ENCODE measurements at regions of chr7 and their contacts with region 1.

Region 1: DNA sequence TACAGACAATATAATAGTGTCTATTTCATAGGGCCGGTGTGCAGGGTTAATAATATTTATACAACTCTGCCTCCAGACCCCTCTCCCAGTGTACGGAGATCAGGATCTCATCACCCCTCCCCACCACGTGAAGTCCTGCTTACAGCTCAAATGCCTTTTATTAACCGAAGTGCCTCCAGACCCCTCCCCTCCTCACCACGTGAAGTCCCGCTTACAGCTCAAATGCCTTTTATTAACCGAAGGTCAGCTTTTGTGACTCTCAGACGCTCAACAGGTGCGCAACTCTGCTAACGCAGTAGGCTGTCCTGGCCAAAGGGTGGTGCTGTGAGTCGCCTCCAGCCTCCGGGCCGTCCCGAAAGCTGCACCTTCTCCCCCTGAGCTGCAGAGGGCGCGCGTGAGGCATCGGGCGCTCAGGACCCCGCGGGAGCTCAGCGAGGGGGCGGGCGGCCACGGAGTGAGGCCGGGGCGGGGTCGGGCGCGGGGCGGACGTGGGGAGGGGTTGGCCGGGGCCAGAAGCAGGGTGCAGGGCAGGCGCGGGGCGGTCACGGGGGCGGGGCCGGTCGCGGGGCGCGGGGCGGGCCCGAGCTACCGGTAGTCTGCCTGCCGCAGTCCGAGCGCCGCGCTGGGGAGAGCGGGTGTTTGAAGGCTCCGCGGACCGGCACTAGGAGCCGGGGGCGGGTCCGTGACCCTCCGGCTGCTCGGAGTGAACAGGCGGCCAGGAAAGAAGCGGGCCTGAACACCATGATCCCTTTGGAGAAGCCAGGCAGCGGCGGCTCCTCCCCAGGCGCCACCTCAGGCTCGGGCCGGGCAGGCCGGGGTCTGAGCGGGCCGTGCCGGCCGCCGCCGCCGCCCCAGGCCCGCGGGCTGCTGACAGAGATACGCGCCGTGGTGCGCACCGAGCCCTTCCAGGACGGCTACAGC is at the start of gene STK17A:
- DNase-seq: peak; percentile 91 to 100 (median 95)
- ATAC-seq: peak; percentile 93
- H3K4me3 ChIP-seq: peak within 1 kb of the TSS; percentile 79
- H3K4me3 Mint-ChIP-seq: peak within 1 kb of the TSS; percentile 96 to 100 (median 98)
- H3K27ac ChIP-seq: peak within 1 kb of the TSS; percentile 96
- H3K27ac Mint-ChIP-seq: peak within 1 kb of the TSS; percentile 89 to 100 (median 95)
- H3K4me1 ChIP-seq: peaks cover 8 to 10% of the 10 kb centered on the region in 2 donors
- H3K4me1 Mint-ChIP-seq: peaks cover 10 to 33% (median 13%) of the 10 kb centered on the region in 7 donors
- H3K27me3 ChIP-seq: no peaks in the 10 kb centered on the region
- H3K27me3 Mint-ChIP-seq: peaks cover 0 to 22% (median 6%) of the 10 kb centered on the region in 5 donors
- total RNA-seq, gene STK17A: 71.3 to 132 (median 95.8) TPM

Region 2: GRCh38 chr7:42940985-42941847 is 641.5 kb before region 1 on chr7:
- CTCF ChIA-PET with region 1: interaction called, 7 read pairs
- POLR2A ChIA-PET with region 1: no interaction called
- intact Hi-C with region 1: loop called in 1 of 2 experiments (anchors 1 kb)
- DNase-seq: peak; percentile 43 to 70 (median 63)
- ATAC-seq: peak; percentile 87
- H3K4me3 ChIP-seq: no peak overlapping the region
- H3K4me3 Mint-ChIP-seq: no peak overlapping the region
- H3K27ac ChIP-seq: no peak overlapping the region
- H3K27ac Mint-ChIP-seq: no peak overlapping the region
- H3K4me1 ChIP-seq: peaks cover 0 to 3% of the 10 kb centered on the region in 2 donors
- H3K4me1 Mint-ChIP-seq: peaks cover 1 to 26% (median 9%) of the 10 kb centered on the region in 7 donors
- H3K27me3 ChIP-seq: no peaks in the 10 kb centered on the region
- H3K27me3 Mint-ChIP-seq: peaks cover 0 to 5% (median 0%) of the 10 kb centered on the region in 5 donors

Region 3: DNA sequence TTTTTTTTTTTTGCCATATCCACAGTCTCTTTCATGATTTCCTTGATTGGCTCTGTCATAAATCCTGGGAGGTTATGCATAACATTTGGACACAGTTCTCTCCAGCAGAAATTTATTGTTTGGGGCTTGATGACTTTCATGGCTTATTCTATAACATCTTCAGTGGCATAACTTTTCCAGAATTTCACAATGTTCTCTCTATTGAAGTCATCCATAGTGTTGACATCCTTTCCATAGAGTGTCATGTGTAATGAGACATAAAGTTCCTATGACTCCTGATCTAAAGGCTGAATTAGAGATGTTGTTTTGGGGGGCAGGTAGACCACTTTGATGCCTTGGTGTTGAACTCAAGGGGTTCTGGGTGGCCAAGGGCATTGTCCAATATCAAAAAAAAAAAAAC is 36.5 kb before region 1 on chr7:
- CTCF ChIA-PET with region 1: no interaction called
- POLR2A ChIA-PET with region 1: no interaction called
- intact Hi-C with region 1: no loop called
- DNase-seq: no peak
- ATAC-seq: no peak
- H3K4me3 ChIP-seq: no peak overlapping the region
- H3K4me3 Mint-ChIP-seq: no peak overlapping the region
- H3K27ac ChIP-seq: no peak overlapping the region
- H3K27ac Mint-ChIP-seq: no peak overlapping the region
- H3K4me1 ChIP-seq: no peaks in the 10 kb centered on the region
- H3K4me1 Mint-ChIP-seq: peaks cover 0 to 5% (median 0%) of the 10 kb centered on the region in 7 donors
- H3K27me3 ChIP-seq: no peaks in the 10 kb centered on the region
- H3K27me3 Mint-ChIP-seq: peaks cover 5 to 42% (median 6%) of the 10 kb centered on the region in 5 donors

Region 4: DNA sequence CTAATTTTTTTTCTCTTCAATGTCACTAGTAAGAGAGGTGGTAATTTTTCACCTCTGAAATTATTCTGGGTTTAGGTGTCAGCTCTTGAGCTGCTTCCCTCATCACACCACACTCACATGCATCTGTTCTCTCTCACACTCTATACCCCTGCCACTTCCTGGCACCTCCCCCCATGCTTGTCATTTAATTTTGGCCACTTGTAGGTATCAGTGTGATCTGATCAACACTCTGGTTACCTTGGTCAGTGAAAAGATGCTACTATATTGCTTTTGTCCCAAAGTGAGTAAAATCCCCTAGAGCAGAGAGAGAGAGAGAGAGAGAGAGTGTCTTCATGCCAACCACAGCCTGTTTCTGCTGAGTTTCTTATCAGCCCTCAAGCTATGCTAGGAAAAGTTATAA is 42.7 kb after region 1 on chr7:
- CTCF ChIA-PET with region 1: interaction called, 13 read pairs
- POLR2A ChIA-PET with region 1: interaction called, 14 read pairs
- intact Hi-C with region 1: loop called (anchors 1 to 2 kb)
- DNase-seq: peak in 7 of 9 donors; percentile 56 to 75 (median 68)
- ATAC-seq: peak; percentile 89
- H3K4me3 ChIP-seq: no peak overlapping the region
- H3K4me3 Mint-ChIP-seq: peak overlapping the region in 9 of 10 donors; percentile 54 to 90 (median 76)
- H3K27ac ChIP-seq: peak overlapping the region; percentile 63
- H3K27ac Mint-ChIP-seq: peak overlapping the region in 7 of 9 donors; percentile 71 to 97 (median 90)
- H3K4me1 ChIP-seq: peaks cover 65 to 76% of the 10 kb centered on the region in 2 donors
- H3K4me1 Mint-ChIP-seq: peaks cover 3 to 96% (median 76%) of the 10 kb centered on the region in 7 donors
- H3K27me3 ChIP-seq: no peaks in the 10 kb centered on the region
- H3K27me3 Mint-ChIP-seq: no peaks in the 10 kb centered on the region

Region 5: GRCh38 chr7:43669286-43670081 is 86.7 kb after region 1 on chr7:
- CTCF ChIA-PET with region 1: interaction called, 10 read pairs
- POLR2A ChIA-PET with region 1: interaction called, 8 read pairs
- intact Hi-C with region 1: no loop called
- DNase-seq: peak in 7 of 9 donors; percentile 30 to 56 (median 47)
- ATAC-seq: peak; percentile 86
- H3K4me3 ChIP-seq: no peak overlapping the region
- H3K4me3 Mint-ChIP-seq: peak overlapping the region; percentile 39 to 81 (median 66)
- H3K27ac ChIP-seq: peak overlapping the region; percentile 53
- H3K27ac Mint-ChIP-seq: peak overlapping the region; percentile 67 to 93 (median 88)
- H3K4me1 ChIP-seq: peaks cover 10 to 29% of the 10 kb centered on the region in 2 donors
- H3K4me1 Mint-ChIP-seq: peaks cover 39 to 95% (median 91%) of the 10 kb centered on the region in 7 donors
- H3K27me3 ChIP-seq: no peaks in the 10 kb centered on the region
- H3K27me3 Mint-ChIP-seq: no peaks in the 10 kb centered on the region

Region 6: DNA sequence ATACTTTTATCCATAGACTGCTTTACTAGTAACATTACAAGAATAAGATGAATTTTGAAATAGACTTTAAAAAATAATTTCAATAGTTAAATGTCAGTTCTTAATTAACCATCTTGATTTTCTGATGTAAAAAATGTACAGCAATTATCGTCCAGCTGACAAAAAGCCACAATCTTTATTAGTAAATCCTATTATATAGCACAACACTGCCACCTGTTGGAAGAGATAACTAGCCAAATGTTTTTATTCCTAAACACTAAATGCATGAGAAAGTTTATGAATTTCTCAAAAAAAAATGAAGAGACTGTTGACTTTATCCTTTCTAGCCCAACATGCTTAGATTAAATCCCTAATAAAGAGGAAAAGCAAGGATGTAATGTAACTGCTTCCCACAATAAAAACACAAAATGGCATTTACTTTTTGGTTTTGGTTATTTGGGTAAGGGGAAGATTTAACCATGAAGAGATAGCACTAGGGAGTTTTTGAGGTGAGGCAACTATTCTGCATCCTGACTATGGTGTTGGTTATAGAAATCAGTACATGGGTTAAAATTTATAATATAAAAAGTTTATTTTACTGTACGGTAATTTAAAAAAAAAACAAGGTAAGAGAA is 138.5 kb after region 1 on chr7:
- CTCF ChIA-PET with region 1: interaction called, 96 read pairs
- POLR2A ChIA-PET with region 1: interaction called, 30 read pairs
- intact Hi-C with region 1: loop called (anchors 1 kb)
- DNase-seq: peak in 7 of 9 donors; percentile 44 to 65 (median 54)
- ATAC-seq: peak; percentile 61
- H3K4me3 ChIP-seq: no peak overlapping the region
- H3K4me3 Mint-ChIP-seq: no peak overlapping the region
- H3K27ac ChIP-seq: no peak overlapping the region
- H3K27ac Mint-ChIP-seq: peak overlapping the region in 3 of 9 donors; percentile 18 to 79 (median 77)
- H3K4me1 ChIP-seq: peaks cover 0 to 4% of the 10 kb centered on the region in 2 donors
- H3K4me1 Mint-ChIP-seq: peaks cover 22 to 73% (median 57%) of the 10 kb centered on the region in 7 donors
- H3K27me3 ChIP-seq: no peaks in the 10 kb centered on the region
- H3K27me3 Mint-ChIP-seq: no peaks in the 10 kb centered on the region

Region 7: DNA sequence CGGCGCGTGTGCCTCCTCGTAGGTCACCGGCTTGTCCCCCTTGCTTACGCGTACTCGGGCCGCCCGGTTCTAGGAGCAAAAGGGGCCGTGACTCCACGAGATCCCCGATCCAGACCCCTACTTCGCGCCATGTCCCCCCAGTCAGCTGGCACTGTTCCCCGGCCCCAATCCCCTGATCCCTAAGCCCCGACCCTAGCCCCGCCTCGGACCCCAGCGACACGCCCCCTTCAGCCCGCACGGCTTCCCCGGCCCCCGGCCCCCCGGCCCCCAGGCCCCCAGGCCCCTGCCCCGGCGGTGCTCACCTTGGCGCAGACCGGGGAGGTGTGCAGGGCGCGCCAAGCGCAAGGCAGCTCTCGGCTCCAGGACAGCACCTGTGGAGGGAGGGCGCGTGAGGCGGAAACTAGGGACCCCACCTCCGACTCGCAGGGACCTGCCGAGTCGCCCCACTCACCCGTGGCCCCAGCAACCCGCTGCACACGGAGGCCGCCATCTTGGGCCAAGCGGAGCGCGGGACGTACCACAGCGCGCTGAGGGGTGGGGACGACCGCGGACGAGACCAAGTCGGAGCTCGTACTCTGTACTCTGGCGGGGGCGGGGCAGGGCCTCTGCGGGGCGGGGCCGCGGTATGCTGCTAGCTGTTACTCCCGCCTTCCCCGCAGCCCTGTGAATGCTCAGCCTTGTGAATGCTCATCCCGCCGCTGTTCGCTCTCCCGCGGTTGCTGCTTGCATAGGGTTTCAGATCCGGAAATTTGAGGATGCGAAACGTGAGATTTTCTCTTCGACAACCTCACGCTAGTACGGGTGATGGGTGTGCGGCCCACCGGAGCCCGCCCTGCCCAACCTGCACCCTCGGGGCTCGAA is 286.5 kb after region 1 on chr7 and contains the start of gene MRPS24:
- CTCF ChIA-PET with region 1: no interaction called
- POLR2A ChIA-PET with region 1: interaction called, 3 read pairs
- intact Hi-C with region 1: loop called in 1 of 2 experiments (anchors 1 kb)
- DNase-seq: peak; percentile 84 to 95 (median 92)
- ATAC-seq: peak; percentile 100
- H3K4me3 ChIP-seq: peak within 1 kb of the TSS; percentile 92
- H3K4me3 Mint-ChIP-seq: peak within 1 kb of the TSS; percentile 88 to 97 (median 95)
- H3K27ac ChIP-seq: peak within 1 kb of the TSS; percentile 78
- H3K27ac Mint-ChIP-seq: peak within 1 kb of the TSS; percentile 86 to 97 (median 90)
- H3K4me1 ChIP-seq: peaks cover 13 to 15% of the 10 kb centered on the region in 2 donors
- H3K4me1 Mint-ChIP-seq: peaks cover 0 to 24% (median 22%) of the 10 kb centered on the region in 7 donors
- H3K27me3 ChIP-seq: no peaks in the 10 kb centered on the region
- H3K27me3 Mint-ChIP-seq: no peaks in the 10 kb centered on the region
- total RNA-seq, gene MRPS24: 44.2 to 76.6 (median 62.3) TPM

Measured in naive thymus-derived CD4-positive, alpha-beta T cell (primary cell).